Ascending aorta (tissue), 2 donors: ENCODE measurements at regions of chr10 and their contacts with region 1.

Region 1: DNA sequence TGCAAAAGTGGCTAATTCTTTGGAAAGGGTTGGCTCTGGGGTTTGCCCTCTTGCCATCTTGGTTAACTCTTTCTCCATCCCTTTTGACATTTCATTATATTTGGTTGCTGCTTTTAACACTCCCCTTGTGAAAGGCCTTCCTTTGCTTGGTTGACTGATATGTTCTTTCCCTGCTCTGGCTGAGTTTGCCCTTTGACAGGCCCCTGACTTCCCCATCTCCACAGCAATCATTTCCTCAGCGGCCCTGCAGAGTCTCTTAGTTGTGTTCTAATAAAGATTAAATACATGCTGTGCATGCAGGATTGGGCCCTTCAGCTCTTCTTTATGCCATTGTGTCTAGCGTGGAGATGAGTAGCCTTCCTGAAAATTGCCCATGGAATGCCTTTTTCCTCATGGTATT is 84.5 kb upstream of the CSTF2T start:
- DNase-seq: no peak
- H3K4me3 ChIP-seq: no peak overlapping the region
- H3K27ac ChIP-seq: peak overlapping the region in 1 of 2 donors; percentile 5
- H3K4me1 ChIP-seq: peaks cover 0 to 18% of the 10 kb centered on the region in 2 donors
- H3K27me3 ChIP-seq: no peaks in the 10 kb centered on the region
- CTCF ChIP-seq: no peak

Region 2: GRCh38 chr10:51733057-51733456 is 50.9 kb before region 1 on chr10:
- intact Hi-C with region 1: loop called (anchors 5 kb)
- DNase-seq: no peak
- H3K4me3 ChIP-seq: no peak overlapping the region
- H3K27ac ChIP-seq: peak overlapping the region; percentile 28 to 76
- H3K4me1 ChIP-seq: peaks cover 0 to 25% of the 10 kb centered on the region in 2 donors
- H3K27me3 ChIP-seq: no peaks in the 10 kb centered on the region
- CTCF ChIP-seq: no peak

Region 3: DNA sequence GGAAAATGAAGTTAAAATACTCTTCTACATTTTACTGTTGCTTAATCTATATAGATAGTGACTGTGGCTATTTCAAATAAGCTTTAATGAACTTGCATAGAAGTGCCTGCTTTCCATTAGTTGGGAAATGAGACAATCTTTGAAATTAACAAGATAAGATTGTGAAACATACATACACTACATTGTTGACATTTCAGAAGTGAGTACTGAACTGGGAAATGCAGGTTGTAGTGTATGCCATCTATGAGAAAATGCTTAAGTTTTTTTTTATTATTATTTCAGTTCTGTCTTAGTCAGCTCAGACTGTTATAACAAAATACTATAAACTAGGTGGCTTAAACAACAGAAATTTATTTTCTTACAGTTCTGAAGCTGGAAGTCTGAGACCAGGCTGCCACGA is 35.0 kb before region 1 on chr10:
- intact Hi-C with region 1: loop called (anchors 5 kb)
- DNase-seq: no peak
- H3K4me3 ChIP-seq: no peak overlapping the region
- H3K27ac ChIP-seq: peak overlapping the region; percentile 13 to 59
- H3K4me1 ChIP-seq: peaks cover 5 to 12% of the 10 kb centered on the region in 2 donors
- H3K27me3 ChIP-seq: no peaks in the 10 kb centered on the region
- CTCF ChIP-seq: no peak

Region 4: DNA sequence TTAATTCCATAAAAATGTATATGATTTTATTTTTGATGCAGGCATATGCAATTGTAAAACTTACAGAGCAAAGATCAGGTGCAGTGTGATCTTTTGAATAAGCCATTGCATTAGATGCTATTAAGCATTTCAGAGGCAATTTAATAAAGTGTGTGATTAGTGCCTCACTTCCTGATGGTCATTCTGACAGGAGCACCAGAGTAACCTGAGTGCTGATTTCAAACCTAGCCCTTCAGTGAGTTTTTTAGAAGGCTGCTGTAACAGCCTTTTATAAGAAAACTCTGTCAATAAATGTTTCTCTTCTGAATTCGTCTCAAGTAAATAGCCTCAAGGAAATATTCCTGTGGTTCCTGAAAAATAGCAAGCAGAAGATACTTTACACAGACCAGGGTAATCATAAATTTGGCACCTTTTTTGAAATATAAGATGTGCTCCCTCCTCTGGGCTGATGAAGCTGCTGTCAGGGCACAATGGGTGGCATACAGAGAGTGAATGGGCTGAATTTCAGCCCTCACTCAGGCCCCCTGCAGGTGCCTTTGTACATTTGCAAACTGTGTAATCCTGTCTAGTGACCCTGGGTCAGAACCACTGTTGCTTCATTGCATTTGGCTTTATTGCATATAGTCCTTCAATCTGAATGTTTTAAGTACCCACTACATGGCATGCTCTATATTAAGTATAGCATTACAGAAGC is 109.2 kb after region 1 on chr10:
- intact Hi-C with region 1: no loop called
- DNase-seq: no peak
- H3K4me3 ChIP-seq: no peak overlapping the region
- H3K27ac ChIP-seq: peak overlapping the region; percentile 14 to 84
- H3K4me1 ChIP-seq: peaks cover 10 to 37% of the 10 kb centered on the region in 2 donors
- H3K27me3 ChIP-seq: no peaks in the 10 kb centered on the region
- CTCF ChIP-seq: no peak

Region 5: DNA sequence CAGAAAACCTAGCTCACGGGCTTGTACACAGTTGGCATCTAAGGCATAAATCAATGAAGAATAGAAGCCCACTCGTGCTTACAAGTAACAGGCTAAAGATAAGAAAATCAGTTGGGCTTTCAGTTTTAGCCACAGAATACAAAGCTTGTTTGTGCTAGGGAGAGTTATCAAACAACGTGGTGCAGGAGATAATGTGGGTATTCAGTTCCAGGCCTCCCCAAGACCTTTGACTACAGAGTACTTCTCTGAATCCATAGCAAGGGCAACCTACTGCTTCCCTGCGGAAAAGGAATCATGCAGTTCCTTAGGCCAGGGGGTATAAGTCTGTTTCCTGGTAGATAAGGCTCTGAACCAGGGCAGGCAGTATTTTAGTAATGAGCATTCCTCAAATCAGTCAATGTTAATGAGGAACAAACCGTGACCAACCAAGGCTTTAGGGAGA is 135.0 kb after region 1 on chr10:
- intact Hi-C with region 1: no loop called
- DNase-seq: no peak
- H3K4me3 ChIP-seq: no peak overlapping the region
- H3K27ac ChIP-seq: peak overlapping the region; percentile 3 to 22
- H3K4me1 ChIP-seq: peaks cover 0 to 28% of the 10 kb centered on the region in 2 donors
- H3K27me3 ChIP-seq: no peaks in the 10 kb centered on the region
- CTCF ChIP-seq: no peak